Activated CD8-positive, alpha-beta T cell treated with anti-CD3 and anti-CD28 coated beads for 36 hours (primary cell): ENCODE measurements at regions of chr17 and their contacts with region 1.

Region 1: GRCh38 chr17:65039336-65039988 is 17.1 kb downstream of the GNA13 start:
- DNase-seq: peak; percentile 68
- ATAC-seq: peak; percentile 83
- H3K4me3 Mint-ChIP-seq: peak overlapping the region; percentile 41
- H3K27ac Mint-ChIP-seq: peak overlapping the region; percentile 90
- H3K4me1 Mint-ChIP-seq: peaks cover 84% of the 10 kb centered on the region
- H3K27me3 Mint-ChIP-seq: no peaks in the 10 kb centered on the region
- CTCF ChIP-seq: no peak

Region 2: DNA sequence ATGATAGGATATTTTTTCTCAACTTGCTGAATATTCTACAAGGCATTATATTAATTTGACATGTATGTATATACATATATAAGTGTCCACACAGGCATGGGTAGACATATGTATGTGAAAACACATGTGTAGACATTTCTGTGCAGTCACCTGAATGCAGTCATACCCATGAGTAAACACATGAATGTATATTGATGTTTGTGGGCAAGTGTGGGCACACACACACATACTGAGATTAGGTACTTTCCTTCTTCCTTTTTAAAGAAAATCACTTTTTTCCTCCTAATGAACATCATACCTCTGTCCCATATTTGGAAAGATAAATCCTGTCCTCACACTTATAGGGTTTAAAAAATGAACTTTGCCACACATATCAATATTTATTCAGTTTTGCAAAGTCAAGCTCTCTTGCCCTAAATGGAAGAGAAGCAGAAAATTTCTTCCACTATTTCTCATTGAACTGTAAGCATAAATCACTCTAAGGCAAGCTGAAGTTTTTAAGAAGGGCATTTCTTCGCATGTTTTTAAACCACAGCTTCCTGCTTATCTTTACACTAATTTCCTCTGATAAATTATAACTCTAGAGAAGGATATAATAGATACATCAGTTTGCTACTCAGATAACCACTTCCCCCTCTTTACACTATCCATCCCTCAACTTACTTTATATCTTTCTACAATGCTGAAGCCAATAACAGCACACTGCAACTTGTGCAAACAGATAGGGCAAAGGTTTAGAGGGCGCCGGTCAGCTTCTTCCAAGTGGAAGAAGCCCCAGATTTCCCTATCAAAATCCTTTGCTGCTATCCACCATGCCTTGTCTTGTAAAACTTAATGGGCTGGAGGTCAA is 70.6 kb before region 1 on chr17:
- CTCF ChIA-PET with region 1: interaction called, 3 read pairs
- POLR2A ChIA-PET with region 1: interaction called, 3 read pairs
- intact Hi-C with region 1: loop called (anchors 5 kb)
- DNase-seq: peak; percentile 49
- ATAC-seq: peak; percentile 46
- H3K4me3 Mint-ChIP-seq: no peak overlapping the region
- H3K27ac Mint-ChIP-seq: peak overlapping the region; percentile 88
- H3K4me1 Mint-ChIP-seq: peaks cover 70% of the 10 kb centered on the region
- H3K27me3 Mint-ChIP-seq: no peaks in the 10 kb centered on the region
- CTCF ChIP-seq: no peak

Region 3: DNA sequence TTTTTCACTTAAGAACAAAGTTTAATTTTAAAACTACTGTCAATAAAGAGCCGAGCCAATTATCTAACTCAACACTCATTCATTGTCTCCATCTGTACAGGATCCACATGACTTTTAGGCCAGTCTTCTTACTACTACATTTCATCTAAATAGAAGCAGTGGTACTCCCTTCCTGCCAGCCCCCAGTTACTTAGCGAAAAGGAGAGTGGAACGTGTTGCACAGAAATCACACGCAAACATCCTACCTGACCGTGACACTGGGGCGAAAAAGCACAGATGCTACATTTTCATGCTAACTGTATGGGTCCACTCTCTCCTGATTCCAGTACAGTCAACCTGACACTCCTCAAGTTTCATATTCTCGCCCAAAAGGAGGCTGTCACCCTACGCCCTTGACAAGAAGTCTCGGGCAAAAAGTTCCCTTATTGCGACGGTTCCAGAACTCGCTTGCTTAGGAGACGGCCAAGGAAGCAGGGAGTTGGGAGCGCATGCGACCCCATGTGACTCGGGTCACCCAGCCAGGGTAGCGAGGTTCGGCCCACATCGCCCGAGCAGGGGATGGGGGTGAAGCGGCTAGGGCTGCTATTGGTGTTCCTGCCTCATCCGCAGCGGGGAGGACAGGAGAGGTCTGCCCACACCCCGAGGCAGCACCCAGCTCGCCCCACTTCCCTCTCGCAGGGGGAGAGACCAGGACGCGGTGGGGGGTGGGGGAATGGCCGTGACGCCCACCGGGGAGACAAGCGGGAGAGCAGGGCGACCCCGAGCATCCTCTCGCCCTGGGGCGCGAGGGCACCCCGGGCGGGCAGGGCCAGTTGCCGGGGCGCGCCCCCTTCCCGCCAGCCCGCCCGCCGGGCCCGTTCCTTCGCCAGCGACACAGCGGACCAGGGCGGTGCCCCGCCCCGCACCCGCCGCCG is 16.1 kb after region 1 on chr17:
- CTCF ChIA-PET with region 1: interaction called, 5 read pairs
- POLR2A ChIA-PET with region 1: interaction called, 4 read pairs
- intact Hi-C with region 1: loop called (anchors 2 kb)
- DNase-seq: peak; percentile 64
- ATAC-seq: peak; percentile 37
- H3K4me3 Mint-ChIP-seq: peak overlapping the region; percentile 94
- H3K27ac Mint-ChIP-seq: peak overlapping the region; percentile 91
- H3K4me1 Mint-ChIP-seq: peaks cover 37% of the 10 kb centered on the region
- H3K27me3 Mint-ChIP-seq: no peaks in the 10 kb centered on the region
- CTCF ChIP-seq: no peak

Region 4: GRCh38 chr17:65071861-65072260 is 32.4 kb after region 1 on chr17:
- CTCF ChIA-PET with region 1: no interaction called
- POLR2A ChIA-PET with region 1: no interaction called
- intact Hi-C with region 1: no loop called
- DNase-seq: no peak
- ATAC-seq: no peak
- H3K4me3 Mint-ChIP-seq: no peak overlapping the region
- H3K27ac Mint-ChIP-seq: no peak overlapping the region
- H3K4me1 Mint-ChIP-seq: no peaks in the 10 kb centered on the region
- H3K27me3 Mint-ChIP-seq: no peaks in the 10 kb centered on the region
- CTCF ChIP-seq: no peak

Region 5: GRCh38 chr17:65085397-65085796 is 45.9 kb after region 1 on chr17:
- CTCF ChIA-PET with region 1: no interaction called
- POLR2A ChIA-PET with region 1: no interaction called
- intact Hi-C with region 1: no loop called
- DNase-seq: no peak
- ATAC-seq: no peak
- H3K4me3 Mint-ChIP-seq: no peak overlapping the region
- H3K27ac Mint-ChIP-seq: no peak overlapping the region
- H3K4me1 Mint-ChIP-seq: no peaks in the 10 kb centered on the region
- H3K27me3 Mint-ChIP-seq: no peaks in the 10 kb centered on the region
- CTCF ChIP-seq: no peak